Psoas muscle (tissue), 8 donors: ENCODE measurements at regions of chr9 and their contacts with region 1.

Region 1: DNA sequence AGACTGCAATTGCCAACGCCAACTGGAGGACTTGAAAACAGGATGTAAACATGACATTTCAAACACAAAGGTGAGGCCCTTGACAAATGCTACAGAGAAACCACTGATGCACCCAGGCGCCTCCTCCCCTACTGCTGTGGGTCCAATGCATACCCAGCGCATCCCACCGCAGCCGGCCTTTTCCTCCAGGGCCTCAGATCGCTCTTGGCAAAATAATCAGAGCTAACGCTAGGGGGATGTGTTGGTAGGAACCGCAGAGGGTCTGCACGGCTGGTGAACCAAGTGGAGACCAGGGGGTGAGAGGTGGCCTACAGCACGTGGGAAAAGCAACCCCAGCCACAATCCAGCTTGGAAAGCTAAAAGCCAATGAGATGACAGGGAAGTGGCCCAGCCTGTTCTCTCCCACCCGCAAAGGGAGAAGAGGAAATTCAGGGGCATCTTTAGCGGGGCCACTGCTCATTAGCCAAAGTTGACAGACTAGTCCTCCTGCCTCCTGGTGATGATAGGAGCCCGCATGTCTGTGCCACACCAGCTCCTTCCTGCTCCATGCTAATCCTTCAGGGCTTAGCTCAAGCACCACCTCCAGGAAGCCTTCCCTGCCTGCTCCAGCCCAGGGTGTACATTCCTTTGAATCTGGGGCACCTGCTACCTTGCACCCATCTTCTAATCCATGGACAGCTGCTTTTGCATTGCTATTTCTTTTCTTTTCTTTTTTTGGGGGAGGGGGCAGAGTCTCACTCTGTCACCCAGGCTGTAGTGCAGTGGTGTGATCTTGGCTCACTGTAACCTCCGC is 5.9 kb downstream of the FAM163B start:
- DNase-seq: peak in 1 of 2 donors; percentile 35
- ATAC-seq: no peak
- H3K4me3 ChIP-seq: no peak overlapping the region
- H3K27ac ChIP-seq: no peak overlapping the region
- H3K4me1 ChIP-seq: no peaks in the 10 kb centered on the region
- H3K27me3 ChIP-seq: peaks cover 0 to 58% (median 21%) of the 10 kb centered on the region in 3 donors
- CTCF ChIP-seq: no peak

Region 2: GRCh38 chr9:133563001-133563796 is 40.1 kb before region 1 on chr9:
- intact Hi-C with region 1: no loop called
- DNase-seq: peak; percentile 58 to 77
- ATAC-seq: peak in 1 of 4 donors; percentile 28
- H3K4me3 ChIP-seq: no peak overlapping the region
- H3K27ac ChIP-seq: no peak overlapping the region
- H3K4me1 ChIP-seq: peaks cover 9% of the 10 kb centered on the region
- H3K27me3 ChIP-seq: peaks cover 0 to 35% (median 3%) of the 10 kb centered on the region in 3 donors
- CTCF ChIP-seq: no peak

Region 3: GRCh38 chr9:133619791-133620190 is 16.5 kb after region 1 on chr9:
- intact Hi-C with region 1: no loop called
- DNase-seq: no peak
- ATAC-seq: no peak
- H3K4me3 ChIP-seq: no peak overlapping the region
- H3K27ac ChIP-seq: no peak overlapping the region
- H3K4me1 ChIP-seq: no peaks in the 10 kb centered on the region
- H3K27me3 ChIP-seq: peaks cover 2 to 73% (median 13%) of the 10 kb centered on the region in 3 donors
- CTCF ChIP-seq: no peak

Region 4: DNA sequence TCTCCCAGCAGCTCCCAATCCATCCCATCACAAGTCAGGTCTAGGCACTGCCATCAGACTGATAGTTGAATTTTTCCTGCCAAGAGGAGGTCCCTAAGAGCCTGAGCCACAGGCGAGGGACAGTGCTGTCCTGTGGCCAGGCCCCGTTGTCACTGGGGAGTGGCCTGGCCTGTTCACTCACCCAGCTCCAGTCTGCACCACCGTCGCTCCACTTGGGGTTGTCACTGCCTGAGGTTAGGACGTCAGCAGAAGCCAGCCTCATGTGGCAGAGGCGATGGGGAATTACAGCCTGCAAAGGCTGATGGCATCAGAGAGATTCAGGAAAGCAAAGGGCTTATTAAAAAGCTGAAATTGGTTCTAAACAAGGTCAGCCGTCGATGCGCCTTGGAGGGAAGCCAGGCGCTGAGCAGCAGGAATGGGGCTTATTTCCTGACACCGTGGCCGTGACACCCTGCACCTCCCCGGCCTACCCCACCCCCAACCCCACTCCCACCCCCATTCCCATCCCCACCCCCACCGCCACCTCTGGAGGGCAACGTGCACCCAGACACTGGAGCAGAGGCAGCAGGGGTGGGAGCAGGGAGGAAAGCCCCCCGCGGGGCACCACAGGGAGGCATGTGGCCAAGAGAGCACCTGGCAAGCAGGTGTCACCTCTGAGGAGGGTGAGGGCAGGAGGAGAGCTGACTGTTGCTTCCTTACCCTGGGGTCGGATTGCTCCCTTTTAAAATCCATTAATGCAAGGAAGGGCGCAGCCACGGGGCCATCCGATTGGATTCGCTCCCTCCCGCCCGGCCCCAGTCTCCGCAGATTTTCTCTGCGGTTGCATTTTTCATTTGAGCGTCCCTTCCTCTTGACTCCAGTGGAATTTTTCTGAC is 29.7 kb after region 1 on chr9:
- intact Hi-C with region 1: loop called in 1 of 2 experiments (anchors 2 kb)
- DNase-seq: peak in 1 of 2 donors; percentile 28
- ATAC-seq: no peak
- H3K4me3 ChIP-seq: no peak overlapping the region
- H3K27ac ChIP-seq: no peak overlapping the region
- H3K4me1 ChIP-seq: no peaks in the 10 kb centered on the region
- H3K27me3 ChIP-seq: peaks cover 0 to 46% (median 16%) of the 10 kb centered on the region in 3 donors
- CTCF ChIP-seq: no peak